ENCODE measurements at regions of chr3 and their contacts with region 1.

Region 1: DNA sequence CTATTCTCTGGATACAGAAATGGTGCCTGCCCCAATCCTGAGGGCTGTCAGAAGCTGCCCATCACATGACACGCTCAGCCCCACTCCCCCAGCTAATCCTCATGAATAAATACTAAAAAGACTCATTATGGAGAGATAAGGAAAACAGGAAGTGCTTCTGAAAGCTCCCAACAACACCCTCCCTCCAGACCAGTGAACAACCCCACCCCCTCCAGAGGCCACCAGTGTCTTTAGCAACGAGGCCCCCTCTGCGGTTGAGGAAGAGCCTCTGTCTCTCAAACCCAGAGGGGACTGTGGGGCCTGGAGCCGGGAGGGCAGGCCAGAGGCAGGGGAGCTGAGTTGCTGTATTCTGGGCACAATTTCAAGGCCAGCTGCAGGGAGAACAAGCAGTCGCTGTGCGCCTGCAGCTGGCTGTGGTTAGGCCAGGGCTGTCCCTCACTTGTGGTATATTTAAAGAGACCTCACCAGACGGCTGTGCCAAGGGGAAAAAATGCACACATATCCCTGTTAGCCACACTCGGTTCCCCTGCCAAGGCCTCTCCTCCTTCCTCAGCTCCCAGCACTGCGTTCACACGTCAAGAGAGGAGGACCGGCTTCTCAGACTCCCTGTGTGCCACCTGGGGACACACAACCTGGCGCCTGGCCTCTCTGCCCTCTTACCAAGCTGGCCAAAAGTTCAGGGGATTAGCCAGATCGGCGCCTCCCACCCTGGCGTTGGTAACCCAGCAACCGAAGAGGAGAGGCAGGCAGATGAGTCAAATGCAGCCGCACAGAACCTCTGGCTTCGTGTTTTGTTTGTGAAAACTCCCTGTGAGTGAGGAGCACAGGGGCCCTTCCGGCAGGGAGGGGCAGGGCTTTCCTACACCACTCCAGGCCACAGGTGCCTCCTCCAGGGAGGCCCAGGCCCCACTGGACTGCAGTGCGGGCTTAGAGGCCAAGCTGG is 101.2 kb upstream of the ETV5 start:
- DNase-seq: peak; percentile 38 to 89 (median 84)
- H3K4me3 ChIP-seq: peak overlapping the region in 1 of 7 experiments; percentile 3
- H3K27ac ChIP-seq: no peak overlapping the region
- H3K4me1 ChIP-seq: peaks cover 0 to 36% (median 22%) of the 10 kb centered on the region in 4 experiments
- H3K27me3 ChIP-seq: no peaks in the 10 kb centered on the region

Region 2: DNA sequence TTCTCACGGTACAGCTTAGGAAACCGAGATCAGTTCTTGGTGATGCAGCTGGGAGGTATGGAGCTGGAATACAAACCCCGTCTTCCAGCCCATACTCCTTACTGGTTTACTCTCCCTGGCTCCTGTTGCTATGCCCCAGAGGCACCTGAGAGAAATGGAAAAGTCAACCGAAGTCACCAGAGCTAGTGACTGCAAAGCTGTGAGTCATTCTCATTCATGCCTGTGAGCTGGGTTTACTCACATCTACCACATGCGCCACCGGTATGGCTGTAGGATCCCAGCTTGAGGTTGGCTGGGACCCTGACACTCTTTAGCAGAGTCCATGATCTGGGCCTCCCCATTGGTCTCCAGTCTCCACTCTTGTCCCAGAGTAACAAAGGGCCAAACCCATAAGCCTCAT is 10.3 kb after region 1 on chr3:
- CTCF ChIA-PET with region 1: interaction called, 10 read pairs
- POLR2A ChIA-PET with region 1: no interaction called
- DNase-seq: no peak
- H3K4me3 ChIP-seq: no peak overlapping the region
- H3K27ac ChIP-seq: no peak overlapping the region
- H3K4me1 ChIP-seq: peaks cover 0 to 5% (median 0%) of the 10 kb centered on the region in 4 experiments
- H3K27me3 ChIP-seq: peaks cover 0 to 3% (median 0%) of the 10 kb centered on the region in 5 experiments

Region 3: GRCh38 chr3:186268616-186269448 is 58.8 kb after region 1 on chr3:
- CTCF ChIA-PET with region 1: no interaction called
- POLR2A ChIA-PET with region 1: no interaction called
- DNase-seq: no peak
- H3K4me3 ChIP-seq: no peak overlapping the region
- H3K27ac ChIP-seq: no peak overlapping the region
- H3K4me1 ChIP-seq: no peaks in the 10 kb centered on the region
- H3K27me3 ChIP-seq: no peaks in the 10 kb centered on the region

Region 4: GRCh38 chr3:186413615-186414415 is 203.7 kb after region 1 on chr3:
- CTCF ChIA-PET with region 1: no interaction called
- POLR2A ChIA-PET with region 1: no interaction called
- DNase-seq: peak; percentile 12 to 48 (median 36)
- H3K4me3 ChIP-seq: peak overlapping the region; percentile 27 to 86 (median 61)
- H3K27ac ChIP-seq: no peak overlapping the region
- H3K4me1 ChIP-seq: peaks cover 3 to 13% (median 10%) of the 10 kb centered on the region in 4 experiments
- H3K27me3 ChIP-seq: peaks cover 0 to 2% (median 0%) of the 10 kb centered on the region in 5 experiments

Measured in common myeloid progenitor, CD34-positive (primary cell).